CD8-positive, alpha-beta T cell (primary cell): ENCODE measurements at regions of chr17 and their contacts with region 1.

Region 1: DNA sequence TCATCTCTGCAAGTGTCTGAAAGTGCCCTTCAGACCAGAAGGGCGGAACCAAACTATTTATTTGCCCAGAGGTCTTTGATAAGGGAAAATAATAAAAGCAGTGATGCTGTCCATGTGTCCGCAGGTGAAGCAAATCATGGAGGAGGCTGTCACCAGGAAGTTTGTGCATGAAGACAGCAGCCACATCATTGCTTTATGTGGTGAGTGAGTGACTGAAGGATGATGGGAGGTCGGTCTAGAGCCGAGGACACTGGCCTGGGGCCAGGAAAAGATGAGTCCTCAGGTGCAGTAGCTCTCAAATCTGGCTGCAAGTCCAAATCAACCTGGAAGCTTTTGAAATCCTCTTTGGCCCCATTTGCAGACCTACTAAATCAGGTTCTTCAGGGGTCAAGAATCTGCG is 6.1 kb downstream of the SGSM2 start:
- DNase-seq: peak in 7 of 9 experiments; percentile 26 to 59 (median 51)
- ATAC-seq: peak; percentile 36
- H3K4me3 ChIP-seq: no peak overlapping the region
- H3K4me3 Mint-ChIP-seq: no peak overlapping the region
- H3K27ac ChIP-seq: no peak overlapping the region
- H3K27ac Mint-ChIP-seq: no peak overlapping the region
- H3K4me1 ChIP-seq: peaks cover 16% of the 10 kb centered on the region
- H3K4me1 Mint-ChIP-seq: peaks cover 26% of the 10 kb centered on the region
- H3K27me3 ChIP-seq: no peaks in the 10 kb centered on the region
- H3K27me3 Mint-ChIP-seq: no peaks in the 10 kb centered on the region
- CTCF ChIP-seq: no peak

Region 2: GRCh38 chr17:2354311-2354710 is 10.9 kb after region 1 on chr17:
- CTCF ChIA-PET with region 1: interaction called, 29 read pairs
- POLR2A ChIA-PET with region 1: interaction called, 3 read pairs
- intact Hi-C with region 1: no loop called
- DNase-seq: no peak
- ATAC-seq: no peak
- H3K4me3 ChIP-seq: no peak overlapping the region
- H3K4me3 Mint-ChIP-seq: no peak overlapping the region
- H3K27ac ChIP-seq: no peak overlapping the region
- H3K27ac Mint-ChIP-seq: peak overlapping the region; percentile 92
- H3K4me1 ChIP-seq: peaks cover 19% of the 10 kb centered on the region
- H3K4me1 Mint-ChIP-seq: peaks cover 19% of the 10 kb centered on the region
- H3K27me3 ChIP-seq: no peaks in the 10 kb centered on the region
- H3K27me3 Mint-ChIP-seq: no peaks in the 10 kb centered on the region
- CTCF ChIP-seq: no peak

Region 3: DNA sequence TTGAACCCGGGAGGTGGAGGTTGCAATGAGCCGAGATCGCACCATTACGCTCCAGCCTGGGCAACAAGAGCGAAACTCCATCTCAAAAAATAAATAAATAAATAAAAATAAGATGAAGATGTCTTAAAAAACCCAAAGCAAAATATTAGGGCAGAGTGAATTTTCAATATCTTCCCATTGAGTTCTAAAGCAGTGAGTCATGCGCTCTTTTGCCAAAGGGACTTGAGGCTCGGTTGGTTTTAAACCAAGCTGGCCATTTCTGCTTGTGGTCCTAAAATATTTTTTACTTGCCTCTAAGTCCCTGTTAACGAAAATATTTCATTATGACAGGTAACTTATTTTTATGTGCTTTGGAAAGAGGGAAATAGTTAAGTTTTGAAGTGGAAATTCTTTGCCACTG is 254.7 kb after region 1 on chr17:
- CTCF ChIA-PET with region 1: no interaction called
- POLR2A ChIA-PET with region 1: no interaction called
- intact Hi-C with region 1: no loop called
- DNase-seq: no peak
- ATAC-seq: no peak
- H3K4me3 ChIP-seq: no peak overlapping the region
- H3K4me3 Mint-ChIP-seq: peak overlapping the region; percentile 50
- H3K27ac ChIP-seq: no peak overlapping the region
- H3K27ac Mint-ChIP-seq: no peak overlapping the region
- H3K4me1 ChIP-seq: peaks cover 59% of the 10 kb centered on the region
- H3K4me1 Mint-ChIP-seq: peaks cover 67% of the 10 kb centered on the region
- H3K27me3 ChIP-seq: no peaks in the 10 kb centered on the region
- H3K27me3 Mint-ChIP-seq: no peaks in the 10 kb centered on the region
- CTCF ChIP-seq: no peak